Activated T-helper 1 cell treated with anti-CD3 and anti-CD28 coated beads, Interleukin-12 subunit alpha, Interleukin-12 subunit beta, Interleukin-2, Interleukin-4 antibody, amounts not matched to agents 30 ng/mL and 10 ng/mL and 1 ng/mL, durations not matched to agents 14 hours and 24 hours and 36 hours (primary cell): ENCODE measurements at regions of chr1 and their contacts with region 1.

Region 1: DNA sequence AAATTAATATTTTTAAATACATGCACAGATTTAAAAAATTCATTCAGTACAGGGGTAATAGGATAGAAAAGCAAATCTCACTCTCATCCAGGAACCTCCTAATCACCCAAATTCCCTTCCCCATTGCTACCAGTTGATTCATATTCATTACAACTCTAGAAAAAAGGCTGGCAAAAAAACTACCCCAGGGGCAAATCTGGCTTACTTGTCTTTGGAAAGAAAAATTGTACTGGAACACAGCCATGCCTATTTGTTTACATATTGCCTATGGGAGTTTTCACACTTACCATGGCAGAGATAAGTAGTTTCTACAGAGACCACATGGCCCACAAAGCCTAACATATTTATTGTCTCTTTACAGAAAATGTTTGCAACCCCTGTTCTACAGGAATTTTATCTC is 8.9 kb upstream of the RBM34 start:
- DNase-seq: no peak
- H3K4me3 Mint-ChIP-seq: no peak overlapping the region
- H3K27ac Mint-ChIP-seq: no peak overlapping the region
- H3K4me1 Mint-ChIP-seq: no peaks in the 10 kb centered on the region
- H3K27me3 Mint-ChIP-seq: no peaks in the 10 kb centered on the region

Region 2: DNA sequence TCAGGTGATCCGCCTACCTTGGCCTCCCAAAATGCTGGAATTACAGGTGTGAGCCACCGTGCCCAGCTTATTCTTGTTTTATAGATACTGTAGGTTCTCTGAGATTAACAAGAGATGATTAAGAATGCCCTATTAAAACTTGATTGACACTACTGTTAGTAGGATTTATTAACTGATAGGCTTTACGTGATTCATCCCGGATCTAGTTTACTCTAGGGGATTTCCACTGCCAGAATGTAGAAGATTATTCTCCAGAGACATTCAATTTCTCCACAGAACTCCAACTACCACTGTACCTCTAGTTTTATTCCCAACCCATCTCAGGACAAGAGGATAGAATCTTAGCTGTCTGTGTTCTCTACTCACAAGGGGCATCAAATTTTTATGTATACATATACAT is 17.3 kb after region 1 on chr1:
- intact Hi-C with region 1: loop called (anchors 2 kb)
- DNase-seq: no peak
- H3K4me3 Mint-ChIP-seq: no peak overlapping the region
- H3K27ac Mint-ChIP-seq: no peak overlapping the region
- H3K4me1 Mint-ChIP-seq: peaks cover 21% of the 10 kb centered on the region
- H3K27me3 Mint-ChIP-seq: no peaks in the 10 kb centered on the region

Region 3: GRCh38 chr1:235221653-235222375 is 51.8 kb after region 1 on chr1:
- intact Hi-C with region 1: loop called (anchors 5 kb)
- DNase-seq: no peak
- H3K4me3 Mint-ChIP-seq: no peak overlapping the region
- H3K27ac Mint-ChIP-seq: no peak overlapping the region
- H3K4me1 Mint-ChIP-seq: no peaks in the 10 kb centered on the region
- H3K27me3 Mint-ChIP-seq: no peaks in the 10 kb centered on the region